ENCODE measurements at regions of chr14 and their contacts with region 1.

Region 1: GRCh38 chr14:66495218-66496098 is 9.3 kb downstream of the CCDC196 start:
- DNase-seq: peak; percentile 26
- H3K4me3 Mint-ChIP-seq: no peak overlapping the region
- H3K27ac Mint-ChIP-seq: no peak overlapping the region
- H3K4me1 Mint-ChIP-seq: no peaks in the 10 kb centered on the region
- H3K27me3 Mint-ChIP-seq: no peaks in the 10 kb centered on the region
- CTCF ChIP-seq: peak; percentile 45

Region 2: DNA sequence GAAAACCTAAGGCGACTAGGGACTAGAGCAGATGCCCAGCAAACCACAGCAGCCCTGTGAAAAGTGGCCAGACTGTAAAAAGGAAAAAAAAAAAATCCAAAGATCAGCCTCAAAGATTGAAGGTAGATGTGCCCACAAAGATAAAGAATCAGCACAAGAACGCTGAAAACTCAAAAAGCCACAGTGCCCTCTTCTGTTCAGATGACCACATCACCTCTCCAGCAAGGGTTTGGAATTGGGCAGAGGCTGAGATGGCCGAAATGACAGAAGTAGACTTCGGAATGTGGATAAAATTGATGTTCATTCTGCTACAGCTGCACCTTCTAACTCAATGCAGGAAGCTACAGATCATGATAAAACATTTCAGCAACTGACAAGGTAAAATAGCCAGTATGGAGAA is 166.9 kb after region 1 on chr14:
- CTCF ChIA-PET with region 1: no interaction called
- intact Hi-C with region 1: loop called (anchors 2 kb)
- DNase-seq: peak; percentile 39
- H3K4me3 Mint-ChIP-seq: no peak overlapping the region
- H3K27ac Mint-ChIP-seq: peak overlapping the region; percentile 1
- H3K4me1 Mint-ChIP-seq: peaks cover 8% of the 10 kb centered on the region
- H3K27me3 Mint-ChIP-seq: no peaks in the 10 kb centered on the region
- CTCF ChIP-seq: peak; percentile 45

Region 3: DNA sequence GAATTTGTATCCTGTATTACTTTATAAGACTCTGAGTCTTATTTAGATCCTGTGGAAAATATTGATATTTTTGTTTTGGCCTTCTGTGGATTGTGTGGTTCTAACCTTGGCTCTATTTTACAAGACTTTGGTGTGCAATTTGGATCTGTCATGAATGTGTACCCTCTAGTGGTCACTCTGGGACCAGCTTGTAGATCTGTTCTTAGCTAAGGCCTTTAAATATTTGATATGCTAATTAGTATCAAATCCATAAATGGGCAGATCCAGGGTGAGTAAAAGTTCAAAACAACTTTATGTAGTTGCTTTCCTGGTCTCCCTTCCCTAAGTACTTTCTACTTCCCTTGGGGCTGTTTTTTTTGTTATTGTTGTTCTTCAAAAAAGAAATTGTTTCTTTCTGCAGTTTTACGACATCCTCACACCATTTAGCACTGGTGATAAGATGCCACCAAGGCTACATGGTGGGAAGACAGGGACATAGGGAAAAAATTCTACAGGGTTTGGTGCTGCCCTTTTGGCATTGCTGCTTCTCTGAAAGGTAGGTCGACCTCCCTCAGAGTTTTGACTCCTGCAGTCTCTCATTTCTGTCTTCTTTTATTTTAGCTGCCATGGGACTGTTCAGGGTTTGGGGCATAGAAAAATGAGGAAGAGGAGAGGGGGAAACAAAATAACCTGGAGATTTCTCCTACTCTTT is 251.0 kb after region 1 on chr14:
- CTCF ChIA-PET with region 1: no interaction called
- intact Hi-C with region 1: loop called (anchors 5 kb)
- DNase-seq: peak; percentile 58
- H3K4me3 Mint-ChIP-seq: peak overlapping the region; percentile 22
- H3K27ac Mint-ChIP-seq: no peak overlapping the region
- H3K4me1 Mint-ChIP-seq: peaks cover 9% of the 10 kb centered on the region
- H3K27me3 Mint-ChIP-seq: no peaks in the 10 kb centered on the region
- CTCF ChIP-seq: peak; percentile 45

Region 4: GRCh38 chr14:67111022-67111421 is 615.6 kb after region 1 on chr14:
- CTCF ChIA-PET with region 1: no interaction called
- intact Hi-C with region 1: loop called (anchors 5 kb)
- DNase-seq: no peak
- H3K4me3 Mint-ChIP-seq: no peak overlapping the region
- H3K27ac Mint-ChIP-seq: no peak overlapping the region
- H3K4me1 Mint-ChIP-seq: no peaks in the 10 kb centered on the region
- H3K27me3 Mint-ChIP-seq: no peaks in the 10 kb centered on the region
- CTCF ChIP-seq: no peak

Region 5: DNA sequence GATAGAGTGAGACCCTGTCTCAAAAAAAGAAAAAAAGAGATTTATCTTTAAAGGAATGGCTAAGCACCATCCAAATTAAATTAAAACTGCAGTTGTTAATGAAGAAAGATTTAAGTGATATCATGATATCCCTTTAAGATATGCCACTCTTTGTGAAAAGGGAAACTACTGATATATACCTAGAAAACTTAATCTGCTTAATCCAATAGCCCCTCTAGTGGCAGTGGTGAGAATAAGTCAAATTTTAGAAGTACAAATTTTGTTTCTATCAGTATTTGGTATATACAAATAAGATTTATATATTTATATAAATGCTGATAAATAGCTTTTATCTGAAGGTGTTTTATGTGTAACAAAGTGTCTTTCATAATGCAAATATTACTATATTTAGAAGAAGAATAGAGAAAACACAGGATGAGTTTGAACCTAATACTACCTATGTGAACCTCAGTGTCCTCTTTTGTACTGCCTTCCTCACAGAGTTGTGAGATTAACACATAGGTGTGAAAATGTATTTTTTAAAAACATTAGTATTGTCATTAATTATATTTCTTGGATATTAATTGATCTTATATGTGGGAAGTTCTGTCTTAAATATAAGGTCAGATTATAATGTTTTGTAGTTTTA is 642.4 kb after region 1 on chr14:
- CTCF ChIA-PET with region 1: interaction called, 13 read pairs
- intact Hi-C with region 1: no loop called
- DNase-seq: no peak
- H3K4me3 Mint-ChIP-seq: no peak overlapping the region
- H3K27ac Mint-ChIP-seq: no peak overlapping the region
- H3K4me1 Mint-ChIP-seq: no peaks in the 10 kb centered on the region
- H3K27me3 Mint-ChIP-seq: no peaks in the 10 kb centered on the region
- CTCF ChIP-seq: peak; percentile 51

Region 6: DNA sequence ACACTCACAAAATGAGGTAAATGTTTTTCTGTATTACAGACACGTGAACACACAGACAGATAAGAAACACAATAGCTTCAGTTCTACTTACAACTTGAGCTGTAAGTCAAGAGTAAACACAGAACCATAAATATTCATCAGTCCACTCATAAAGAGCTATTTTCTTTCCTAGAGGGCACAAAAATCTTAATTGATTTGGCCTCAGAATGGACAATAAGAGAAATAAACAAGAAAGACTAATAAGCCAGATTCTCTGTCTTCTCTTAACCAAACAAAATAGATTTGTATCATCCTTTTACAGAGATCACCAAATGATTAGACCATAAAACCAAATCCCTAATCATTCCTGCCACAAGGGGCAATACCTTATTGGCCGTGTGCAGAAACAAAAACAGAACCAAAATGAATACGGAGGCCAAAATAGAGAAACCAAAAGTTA is 655.7 kb after region 1 on chr14:
- CTCF ChIA-PET with region 1: no interaction called
- intact Hi-C with region 1: no loop called
- DNase-seq: no peak
- H3K4me3 Mint-ChIP-seq: no peak overlapping the region
- H3K27ac Mint-ChIP-seq: no peak overlapping the region
- H3K4me1 Mint-ChIP-seq: no peaks in the 10 kb centered on the region
- H3K27me3 Mint-ChIP-seq: no peaks in the 10 kb centered on the region
- CTCF ChIP-seq: no peak